ENCODE measurements at regions of chr1 and their contacts with region 1.

Region 1: GRCh38 chr1:89987170-89987819 is 7.6 kb upstream of the ZNF326 start:
- DNase-seq: no peak
- H3K4me3 ChIP-seq: no peak overlapping the region
- H3K27ac ChIP-seq: no peak overlapping the region
- H3K4me1 ChIP-seq: no peaks in the 10 kb centered on the region
- H3K27me3 ChIP-seq: no peaks in the 10 kb centered on the region
- CTCF ChIP-seq: peak; percentile 63 to 84 (median 77)

Region 2: GRCh38 chr1:89804642-89805237 is 182.6 kb before region 1 on chr1:
- intact Hi-C with region 1: loop called (anchors 1 kb)
- DNase-seq: peak; percentile 33 to 92
- H3K4me3 ChIP-seq: no peak overlapping the region
- H3K27ac ChIP-seq: no peak overlapping the region
- H3K4me1 ChIP-seq: no peaks in the 10 kb centered on the region
- H3K27me3 ChIP-seq: no peaks in the 10 kb centered on the region
- CTCF ChIP-seq: peak; percentile 65 to 83 (median 82)

Region 3: GRCh38 chr1:89843281-89844121 is 143.8 kb before region 1 on chr1:
- intact Hi-C with region 1: loop called (anchors 1 kb)
- DNase-seq: peak in 1 of 2 donors; percentile 73
- H3K4me3 ChIP-seq: peak overlapping the region; percentile 75 to 92
- H3K27ac ChIP-seq: peak overlapping the region; percentile 61 to 70
- H3K4me1 ChIP-seq: peaks cover 3 to 9% of the 10 kb centered on the region in 2 donors
- H3K27me3 ChIP-seq: no peaks in the 10 kb centered on the region
- CTCF ChIP-seq: peak; percentile 7 to 63 (median 39)

Measured in ascending aorta (tissue), 2 donors.